GM10248 (cell line): ENCODE measurements at regions of chr1 and their contacts with region 1.

Region 1: GRCh38 chr1:151594143-151594625 is 17.7 kb upstream of the SNX27 start:
- DNase-seq: peak; percentile 86
- CTCF ChIP-seq: peak; percentile 94

Region 2: DNA sequence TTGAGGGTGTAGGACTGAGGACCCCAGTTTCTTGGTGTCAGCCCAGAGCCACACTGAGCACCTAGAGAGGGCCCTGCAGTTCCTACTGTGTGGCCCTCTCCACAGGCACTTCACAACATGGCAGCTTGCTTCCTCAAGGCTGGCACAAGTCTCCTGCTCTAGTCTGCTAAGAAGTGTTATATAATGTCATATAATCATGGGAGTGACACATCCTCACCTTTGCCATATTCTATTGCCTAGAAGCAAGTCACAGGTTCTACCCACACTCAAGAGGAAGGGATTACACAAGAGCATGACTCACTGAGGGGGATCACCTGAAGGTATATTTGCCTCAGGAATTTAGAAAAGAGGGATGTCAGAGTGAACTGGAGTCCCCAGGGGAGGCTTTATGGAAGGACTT is 12.2 kb after region 1 on chr1:
- CTCF ChIA-PET with region 1: interaction called, 22 read pairs
- POLR2A ChIA-PET with region 1: no interaction called
- DNase-seq: no peak
- CTCF ChIP-seq: no peak

Region 3: GRCh38 chr1:151733134-151733533 is 138.9 kb after region 1 on chr1:
- CTCF ChIA-PET with region 1: interaction called, 25 read pairs
- POLR2A ChIA-PET with region 1: interaction called, 3 read pairs
- DNase-seq: no peak
- CTCF ChIP-seq: no peak